Activated CD4-positive, alpha-beta T cell treated with anti-CD3 and anti-CD28 coated beads for 36 hours (primary cell): ENCODE measurements at regions of chr7 and their contacts with region 1.

Region 1: DNA sequence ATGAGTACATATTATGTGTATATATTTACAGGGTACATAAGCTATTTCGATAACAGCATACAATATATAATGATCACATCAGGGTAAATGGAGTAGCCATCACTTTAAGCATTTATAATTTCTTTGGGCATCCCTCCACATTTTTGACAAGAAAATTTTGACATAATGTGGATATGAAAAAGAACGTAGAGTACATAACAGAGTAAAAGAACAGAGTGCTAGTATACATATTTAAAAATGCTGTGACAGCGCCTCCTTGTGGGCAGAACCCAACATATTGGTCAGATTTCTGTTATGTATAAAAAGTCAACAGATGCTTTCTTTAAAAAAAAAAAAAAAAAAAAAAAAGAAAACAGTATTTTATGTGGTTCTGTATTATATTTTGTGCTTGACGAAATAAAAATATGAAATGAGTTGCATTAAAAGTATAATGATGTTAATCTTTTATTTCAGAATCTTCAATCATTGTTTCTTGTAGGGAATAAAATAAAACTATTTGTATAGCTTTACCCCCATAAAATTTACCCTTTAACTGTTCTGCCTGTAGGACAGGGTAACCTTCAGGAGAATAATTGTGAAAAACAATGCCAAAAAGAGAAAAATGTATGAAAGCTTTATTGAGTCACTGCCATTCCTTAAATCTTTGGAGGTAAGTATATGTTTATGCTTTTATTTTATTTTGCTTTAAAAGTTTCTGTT is 18.3 kb upstream of the HBP1 start:
- DNase-seq: peak; percentile 86
- ATAC-seq: peak; percentile 83
- H3K4me3 Mint-ChIP-seq: no peak overlapping the region
- H3K27ac Mint-ChIP-seq: no peak overlapping the region
- H3K4me1 Mint-ChIP-seq: peaks cover 4% of the 10 kb centered on the region
- H3K27me3 Mint-ChIP-seq: no peaks in the 10 kb centered on the region

Region 2: DNA sequence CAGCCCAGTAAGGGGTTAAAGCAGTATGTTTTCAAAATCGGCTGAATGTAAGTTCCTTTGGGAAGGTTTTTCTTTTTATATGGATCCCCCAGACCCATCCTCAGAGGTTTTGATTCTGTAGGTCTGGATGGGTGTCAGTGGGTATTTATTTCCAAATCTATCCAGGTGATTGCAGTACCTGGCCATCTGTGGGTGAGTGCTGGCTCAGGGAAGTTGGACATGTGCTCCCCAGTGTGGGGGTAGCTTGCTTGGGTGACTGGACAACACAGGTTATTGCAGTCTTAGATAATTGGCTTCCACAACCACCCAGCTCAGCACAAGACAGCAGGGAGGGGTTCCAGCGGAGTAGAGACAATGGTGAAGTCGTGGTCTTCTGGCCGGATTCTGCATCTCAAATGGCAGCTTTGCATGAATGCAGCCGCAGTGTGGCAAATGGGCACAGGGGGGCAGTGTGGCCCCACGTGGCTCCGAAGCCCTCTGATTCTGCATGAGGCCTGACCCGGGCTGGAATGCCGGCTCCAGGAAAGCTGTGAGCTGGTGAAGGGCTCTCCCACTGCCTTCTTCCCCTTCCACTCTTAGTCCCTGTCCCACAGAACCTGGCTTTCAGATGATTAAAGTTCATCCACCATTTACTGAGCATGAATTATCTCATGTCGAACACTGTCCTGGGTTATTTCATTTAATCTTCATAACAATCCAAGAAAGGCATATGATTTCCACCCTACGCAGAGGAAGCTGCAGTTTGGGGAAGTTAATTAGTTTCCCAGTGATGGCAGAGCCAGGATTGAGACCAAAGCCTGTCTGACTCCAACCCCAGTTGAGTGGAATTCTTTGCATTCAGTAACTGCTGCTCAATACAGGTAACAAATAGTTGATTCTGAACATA is 973.9 kb before region 1 on chr7:
- CTCF ChIA-PET with region 1: no interaction called
- POLR2A ChIA-PET with region 1: no interaction called
- intact Hi-C with region 1: loop called in 1 of 2 experiments (anchors 10 kb)
- DNase-seq: peak; percentile 86
- ATAC-seq: peak; percentile 91
- H3K4me3 Mint-ChIP-seq: no peak overlapping the region
- H3K27ac Mint-ChIP-seq: peak overlapping the region; percentile 4
- H3K4me1 Mint-ChIP-seq: peaks cover 2% of the 10 kb centered on the region
- H3K27me3 Mint-ChIP-seq: peaks cover 10% of the 10 kb centered on the region

Region 3: DNA sequence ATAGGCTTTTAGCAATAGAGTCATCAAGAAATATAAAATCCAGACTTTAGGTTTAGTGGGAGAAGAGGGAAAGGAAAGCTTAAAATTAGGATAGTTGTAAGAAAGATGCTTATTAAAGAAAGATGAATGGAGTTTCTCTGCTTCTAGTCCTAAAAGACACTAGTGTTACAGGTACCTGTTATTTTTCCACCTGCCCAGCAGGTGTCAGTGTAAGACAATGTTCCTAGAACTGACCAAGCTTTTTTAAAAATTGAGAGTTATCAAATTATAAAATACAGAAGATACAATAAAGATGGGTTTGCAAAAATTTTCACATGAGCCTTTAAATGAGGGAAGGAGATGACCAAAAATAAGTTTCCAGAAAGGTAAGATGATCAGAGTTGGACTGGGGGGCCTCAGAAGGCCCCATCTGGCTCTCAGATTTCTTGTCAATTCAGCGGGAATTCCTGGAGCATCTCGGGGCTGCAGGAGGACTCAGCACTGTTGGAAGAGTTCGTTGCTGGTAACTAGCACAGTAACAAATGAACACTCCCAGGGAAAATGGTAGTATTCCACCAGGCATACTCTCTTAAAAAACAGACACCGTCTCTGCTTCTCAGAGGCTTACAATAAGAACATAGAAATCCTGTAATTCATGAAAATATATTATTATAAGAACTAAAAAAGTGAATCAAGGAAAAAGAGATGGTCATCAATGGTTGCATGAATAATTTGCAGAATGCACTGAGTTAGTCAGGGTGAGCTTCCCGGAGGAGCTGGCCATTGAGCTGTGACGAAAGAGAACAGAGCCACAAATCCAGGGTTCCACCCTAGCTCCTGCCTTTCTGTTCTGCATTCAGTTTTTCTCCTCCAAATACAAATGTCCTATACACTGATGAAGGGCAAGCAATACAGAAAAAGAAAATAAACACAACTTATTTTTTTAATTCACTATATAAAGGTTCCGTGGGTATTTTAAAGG is 357.2 kb before region 1 on chr7:
- CTCF ChIA-PET with region 1: interaction called, 95 read pairs
- POLR2A ChIA-PET with region 1: no interaction called
- intact Hi-C with region 1: loop called (anchors 1 kb)
- DNase-seq: peak; percentile 55
- ATAC-seq: peak; percentile 44
- H3K4me3 Mint-ChIP-seq: no peak overlapping the region
- H3K27ac Mint-ChIP-seq: no peak overlapping the region
- H3K4me1 Mint-ChIP-seq: no peaks in the 10 kb centered on the region
- H3K27me3 Mint-ChIP-seq: no peaks in the 10 kb centered on the region

Region 4: DNA sequence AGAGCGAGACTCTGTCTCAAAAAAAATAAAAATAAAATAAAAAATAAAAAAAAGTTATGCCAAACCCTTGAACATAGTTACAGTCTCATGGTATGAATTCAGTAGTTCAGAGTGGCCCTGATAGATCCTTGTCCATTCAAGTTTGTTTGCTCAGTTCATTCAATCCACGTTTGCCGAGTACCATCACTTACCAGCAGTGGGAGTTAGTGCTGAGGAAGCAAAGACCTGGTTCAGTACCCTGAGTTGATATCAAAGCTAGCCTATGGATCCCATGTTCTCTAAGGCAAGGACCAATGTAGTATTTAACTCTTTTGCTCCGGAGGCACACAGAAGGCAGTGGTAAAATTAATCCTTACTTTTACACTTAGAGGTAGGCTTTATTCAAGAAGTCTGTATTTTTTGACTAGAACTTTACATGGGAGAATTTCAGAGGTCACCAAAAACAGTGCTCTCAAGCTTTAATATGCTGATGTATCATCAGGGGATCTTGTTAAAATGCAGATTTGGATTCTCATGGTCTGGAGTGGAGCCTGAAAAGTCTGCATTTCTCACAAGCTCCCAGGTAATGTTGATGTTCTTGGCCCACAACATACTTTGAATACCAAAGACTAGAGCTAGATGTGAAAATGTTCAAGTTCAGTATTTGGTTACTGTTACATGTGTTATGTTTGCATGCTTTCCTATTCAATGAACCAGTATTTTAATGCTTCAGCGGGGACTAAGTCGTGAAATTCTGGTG is 19.9 kb before region 1 on chr7:
- CTCF ChIA-PET with region 1: interaction called, 52 read pairs
- POLR2A ChIA-PET with region 1: no interaction called
- intact Hi-C with region 1: no loop called
- DNase-seq: no peak
- ATAC-seq: no peak
- H3K4me3 Mint-ChIP-seq: no peak overlapping the region
- H3K27ac Mint-ChIP-seq: no peak overlapping the region
- H3K4me1 Mint-ChIP-seq: peaks cover 13% of the 10 kb centered on the region
- H3K27me3 Mint-ChIP-seq: peaks cover 3% of the 10 kb centered on the region

Region 5: GRCh38 chr7:107304636-107305035 is 154.1 kb after region 1 on chr7:
- CTCF ChIA-PET with region 1: no interaction called
- POLR2A ChIA-PET with region 1: no interaction called
- intact Hi-C with region 1: no loop called
- DNase-seq: no peak
- ATAC-seq: no peak
- H3K4me3 Mint-ChIP-seq: no peak overlapping the region
- H3K27ac Mint-ChIP-seq: no peak overlapping the region
- H3K4me1 Mint-ChIP-seq: no peaks in the 10 kb centered on the region
- H3K27me3 Mint-ChIP-seq: no peaks in the 10 kb centered on the region

Region 6: DNA sequence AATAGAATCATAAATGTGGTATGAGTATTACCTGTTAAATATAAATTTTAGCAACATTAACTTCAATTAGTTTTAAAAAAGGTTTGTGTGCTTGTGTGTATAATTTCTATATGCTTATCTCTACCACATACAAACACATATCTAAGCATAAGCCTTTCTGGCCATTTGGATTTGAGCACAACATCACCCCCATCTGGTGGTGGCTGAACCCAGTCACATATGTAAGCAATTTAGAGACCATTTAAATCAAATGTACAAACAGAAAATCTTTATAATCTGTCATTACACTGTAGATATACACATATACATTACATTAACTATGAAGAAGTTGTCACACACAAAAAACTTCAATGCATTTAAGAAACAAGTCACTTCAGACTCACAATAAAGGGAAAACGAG is 351.1 kb after region 1 on chr7:
- CTCF ChIA-PET with region 1: interaction called, 8 read pairs
- POLR2A ChIA-PET with region 1: no interaction called
- intact Hi-C with region 1: loop called in 1 of 2 experiments (anchors 5 kb)
- DNase-seq: peak; percentile 49
- ATAC-seq: no peak
- H3K4me3 Mint-ChIP-seq: no peak overlapping the region
- H3K27ac Mint-ChIP-seq: no peak overlapping the region
- H3K4me1 Mint-ChIP-seq: peaks cover 11% of the 10 kb centered on the region
- H3K27me3 Mint-ChIP-seq: no peaks in the 10 kb centered on the region